ENCODE measurements at regions of chr1 and their contacts with region 1.

Region 1: GRCh38 chr1:239719642-239720258 is 333.4 kb downstream of the CHRM3 start:
- DNase-seq: peak in 13 of 14 experiments; percentile 8 to 90 (median 39)
- ATAC-seq: peak; percentile 80
- H3K4me3 ChIP-seq: peak overlapping the region; percentile 65
- H3K4me3 Mint-ChIP-seq: no peak overlapping the region
- H3K27ac ChIP-seq: peak overlapping the region; percentile 75 to 87
- H3K27ac Mint-ChIP-seq: no peak overlapping the region
- H3K4me1 ChIP-seq: peaks cover 20% of the 10 kb centered on the region
- H3K4me1 Mint-ChIP-seq: peaks cover 41% of the 10 kb centered on the region
- H3K27me3 ChIP-seq: no peaks in the 10 kb centered on the region
- H3K27me3 Mint-ChIP-seq: no peaks in the 10 kb centered on the region
- CTCF ChIP-seq: no peak

Region 2: GRCh38 chr1:239413916-239414315 is 305.8 kb before region 1 on chr1:
- CTCF ChIA-PET with region 1: no interaction called
- POLR2A ChIA-PET with region 1: no interaction called
- intact Hi-C with region 1: loop called in 1 of 2 experiments (anchors 5 kb)
- DNase-seq: no peak
- ATAC-seq: no peak
- H3K4me3 ChIP-seq: no peak overlapping the region
- H3K4me3 Mint-ChIP-seq: no peak overlapping the region
- H3K27ac ChIP-seq: no peak overlapping the region
- H3K27ac Mint-ChIP-seq: no peak overlapping the region
- H3K4me1 ChIP-seq: no peaks in the 10 kb centered on the region
- H3K4me1 Mint-ChIP-seq: no peaks in the 10 kb centered on the region
- H3K27me3 ChIP-seq: no peaks in the 10 kb centered on the region
- H3K27me3 Mint-ChIP-seq: no peaks in the 10 kb centered on the region
- CTCF ChIP-seq: no peak

Region 3: DNA sequence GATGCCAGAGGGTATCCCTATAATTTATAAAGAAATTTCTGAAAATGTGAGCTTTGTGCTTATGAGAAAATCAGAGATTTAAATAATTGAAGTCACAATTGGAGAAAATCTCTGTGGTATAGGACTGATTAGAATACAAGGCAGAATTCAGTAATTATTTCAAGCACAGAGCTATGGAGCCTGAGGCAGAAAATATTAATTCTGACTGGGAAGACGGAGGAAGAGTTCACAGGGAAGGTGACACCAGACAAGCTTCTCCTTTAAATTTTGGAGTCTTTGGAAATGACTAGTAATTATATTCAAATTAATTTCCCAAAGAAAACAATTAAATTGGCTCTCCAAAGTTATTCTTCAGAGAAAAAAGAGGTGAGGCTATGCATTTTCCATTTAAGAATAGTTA is 211.9 kb before region 1 on chr1:
- CTCF ChIA-PET with region 1: no interaction called
- POLR2A ChIA-PET with region 1: no interaction called
- intact Hi-C with region 1: loop called in 1 of 2 experiments (anchors 10 kb)
- DNase-seq: no peak
- ATAC-seq: no peak
- H3K4me3 ChIP-seq: no peak overlapping the region
- H3K4me3 Mint-ChIP-seq: no peak overlapping the region
- H3K27ac ChIP-seq: no peak overlapping the region
- H3K27ac Mint-ChIP-seq: no peak overlapping the region
- H3K4me1 ChIP-seq: no peaks in the 10 kb centered on the region
- H3K4me1 Mint-ChIP-seq: peaks cover 4% of the 10 kb centered on the region
- H3K27me3 ChIP-seq: no peaks in the 10 kb centered on the region
- H3K27me3 Mint-ChIP-seq: no peaks in the 10 kb centered on the region
- CTCF ChIP-seq: no peak

Region 4: GRCh38 chr1:239706245-239706892 is 13.4 kb before region 1 on chr1:
- CTCF ChIA-PET with region 1: interaction called, 3 read pairs
- POLR2A ChIA-PET with region 1: interaction called, 50 read pairs
- intact Hi-C with region 1: no loop called
- DNase-seq: no peak
- ATAC-seq: no peak
- H3K4me3 ChIP-seq: no peak overlapping the region
- H3K4me3 Mint-ChIP-seq: no peak overlapping the region
- H3K27ac ChIP-seq: no peak overlapping the region
- H3K27ac Mint-ChIP-seq: no peak overlapping the region
- H3K4me1 ChIP-seq: no peaks in the 10 kb centered on the region
- H3K4me1 Mint-ChIP-seq: peaks cover 55% of the 10 kb centered on the region
- H3K27me3 ChIP-seq: no peaks in the 10 kb centered on the region
- H3K27me3 Mint-ChIP-seq: no peaks in the 10 kb centered on the region
- CTCF ChIP-seq: no peak

Region 5: GRCh38 chr1:239736479-239736878 is 16.7 kb after region 1 on chr1:
- CTCF ChIA-PET with region 1: no interaction called
- POLR2A ChIA-PET with region 1: interaction called, 25 read pairs
- intact Hi-C with region 1: no loop called
- DNase-seq: no peak
- ATAC-seq: no peak
- H3K4me3 ChIP-seq: no peak overlapping the region
- H3K4me3 Mint-ChIP-seq: no peak overlapping the region
- H3K27ac ChIP-seq: no peak overlapping the region
- H3K27ac Mint-ChIP-seq: no peak overlapping the region
- H3K4me1 ChIP-seq: no peaks in the 10 kb centered on the region
- H3K4me1 Mint-ChIP-seq: peaks cover 51% of the 10 kb centered on the region
- H3K27me3 ChIP-seq: no peaks in the 10 kb centered on the region
- H3K27me3 Mint-ChIP-seq: no peaks in the 10 kb centered on the region
- CTCF ChIP-seq: no peak

Region 6: DNA sequence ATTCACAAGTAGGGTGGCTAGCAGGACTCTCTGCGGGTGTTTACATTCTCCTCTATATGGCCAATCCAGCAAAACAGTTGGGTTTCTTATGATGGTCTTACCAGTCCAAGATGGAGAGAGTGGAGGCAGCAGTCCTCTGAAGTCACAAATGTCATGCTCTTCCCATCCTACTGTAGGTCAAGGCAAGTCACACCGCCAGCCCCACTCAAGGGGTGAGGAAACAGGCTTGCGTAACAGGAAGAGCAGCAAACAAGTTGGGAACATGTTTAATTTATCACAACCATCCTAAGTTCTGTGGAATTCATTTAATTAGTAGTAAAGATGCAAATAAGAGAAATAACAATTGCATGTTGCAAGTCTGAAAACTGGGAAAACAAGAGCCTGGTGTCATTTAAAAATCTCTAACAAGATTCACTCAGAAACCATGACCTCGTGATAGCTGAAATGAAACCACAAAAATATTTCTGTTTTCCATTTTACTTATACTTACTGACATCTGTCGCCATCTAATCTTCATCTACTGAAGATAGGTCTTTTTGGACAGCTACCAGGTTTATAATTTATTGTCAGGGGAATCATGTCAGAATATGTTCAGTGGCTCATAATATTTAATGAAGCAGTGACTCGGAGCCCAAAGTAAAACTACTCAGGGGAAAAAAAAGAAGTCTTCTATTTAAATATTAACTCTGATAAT is 22.8 kb after region 1 on chr1:
- CTCF ChIA-PET with region 1: no interaction called
- POLR2A ChIA-PET with region 1: interaction called, 25 read pairs
- intact Hi-C with region 1: loop called in 1 of 2 experiments (anchors 5 kb)
- DNase-seq: no peak
- ATAC-seq: no peak
- H3K4me3 ChIP-seq: no peak overlapping the region
- H3K4me3 Mint-ChIP-seq: peak overlapping the region; percentile 35
- H3K27ac ChIP-seq: no peak overlapping the region
- H3K27ac Mint-ChIP-seq: no peak overlapping the region
- H3K4me1 ChIP-seq: peaks cover 7% of the 10 kb centered on the region
- H3K4me1 Mint-ChIP-seq: peaks cover 44% of the 10 kb centered on the region
- H3K27me3 ChIP-seq: no peaks in the 10 kb centered on the region
- H3K27me3 Mint-ChIP-seq: no peaks in the 10 kb centered on the region
- CTCF ChIP-seq: no peak

Region 7: GRCh38 chr1:239803781-239804180 is 84.0 kb after region 1 on chr1:
- CTCF ChIA-PET with region 1: no interaction called
- POLR2A ChIA-PET with region 1: interaction called, 9 read pairs
- intact Hi-C with region 1: loop called in 1 of 2 experiments (anchors 5 kb)
- DNase-seq: no peak
- ATAC-seq: no peak
- H3K4me3 ChIP-seq: no peak overlapping the region
- H3K4me3 Mint-ChIP-seq: no peak overlapping the region
- H3K27ac ChIP-seq: no peak overlapping the region
- H3K27ac Mint-ChIP-seq: no peak overlapping the region
- H3K4me1 ChIP-seq: no peaks in the 10 kb centered on the region
- H3K4me1 Mint-ChIP-seq: peaks cover 13% of the 10 kb centered on the region
- H3K27me3 ChIP-seq: no peaks in the 10 kb centered on the region
- H3K27me3 Mint-ChIP-seq: no peaks in the 10 kb centered on the region
- CTCF ChIP-seq: no peak

Measured in CD4-positive, alpha-beta T cell (primary cell).